ENCODE measurements at regions of chr2 and their contacts with region 1.

Region 1: GRCh38 chr2:98234776-98235175 is 111.5 kb upstream of the CNGA3 start:
- DNase-seq: no peak
- H3K4me3 ChIP-seq: no peak overlapping the region
- H3K27ac ChIP-seq: no peak overlapping the region
- H3K4me1 ChIP-seq: no peaks in the 10 kb centered on the region
- H3K27me3 ChIP-seq: peaks cover 16% of the 10 kb centered on the region
- CTCF ChIP-seq: no peak

Region 2: DNA sequence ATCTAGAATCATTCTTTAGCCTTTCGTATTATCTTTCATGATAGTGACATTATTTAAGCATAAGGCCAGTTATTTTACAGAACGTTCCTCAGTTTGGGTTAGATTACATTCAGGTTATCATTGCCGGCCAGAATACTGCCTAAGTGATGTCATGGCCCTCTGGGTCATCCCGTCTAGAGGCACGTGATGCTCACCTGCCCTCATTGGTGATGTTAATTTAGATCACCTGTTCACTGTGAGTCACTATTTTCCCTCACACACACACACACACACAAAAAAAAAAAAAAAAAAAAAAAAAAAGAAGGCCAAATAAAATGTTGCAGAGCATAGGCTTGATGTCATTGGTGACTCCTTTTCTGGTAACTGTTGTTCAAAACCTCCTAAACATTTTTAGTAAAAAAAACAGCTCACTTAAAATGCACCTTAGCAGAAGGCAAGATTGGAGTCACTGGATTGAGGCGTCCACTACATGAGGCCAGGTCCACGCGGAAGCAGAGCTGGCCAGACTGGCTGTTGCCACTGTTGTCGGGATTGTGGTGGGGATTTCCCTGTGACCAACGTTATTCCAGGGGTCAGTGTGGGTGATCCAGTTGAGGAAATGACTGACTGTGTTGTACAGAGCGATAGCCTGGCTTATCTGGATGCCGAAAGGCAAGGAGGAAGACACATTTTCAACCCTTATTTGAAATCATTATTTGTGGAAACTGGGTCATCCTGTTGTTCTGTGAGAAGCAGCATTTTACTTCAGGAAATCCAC is 59.3 kb after region 1 on chr2:
- CTCF ChIA-PET with region 1: no interaction called
- POLR2A ChIA-PET with region 1: interaction called, 13 read pairs
- intact Hi-C with region 1: no loop called
- DNase-seq: no peak
- H3K4me3 ChIP-seq: no peak overlapping the region
- H3K27ac ChIP-seq: no peak overlapping the region
- H3K4me1 ChIP-seq: no peaks in the 10 kb centered on the region
- H3K27me3 ChIP-seq: peaks cover 38% of the 10 kb centered on the region
- CTCF ChIP-seq: no peak